Activated CD4-positive, alpha-beta T cell treated with anti-CD3 and anti-CD28 coated beads, Interleukin-2, amount 10 ng/mL, durations not matched to agents 24 days and 14 days (primary cell): ENCODE measurements at regions of chr14 and their contacts with region 1.

Region 1: DNA sequence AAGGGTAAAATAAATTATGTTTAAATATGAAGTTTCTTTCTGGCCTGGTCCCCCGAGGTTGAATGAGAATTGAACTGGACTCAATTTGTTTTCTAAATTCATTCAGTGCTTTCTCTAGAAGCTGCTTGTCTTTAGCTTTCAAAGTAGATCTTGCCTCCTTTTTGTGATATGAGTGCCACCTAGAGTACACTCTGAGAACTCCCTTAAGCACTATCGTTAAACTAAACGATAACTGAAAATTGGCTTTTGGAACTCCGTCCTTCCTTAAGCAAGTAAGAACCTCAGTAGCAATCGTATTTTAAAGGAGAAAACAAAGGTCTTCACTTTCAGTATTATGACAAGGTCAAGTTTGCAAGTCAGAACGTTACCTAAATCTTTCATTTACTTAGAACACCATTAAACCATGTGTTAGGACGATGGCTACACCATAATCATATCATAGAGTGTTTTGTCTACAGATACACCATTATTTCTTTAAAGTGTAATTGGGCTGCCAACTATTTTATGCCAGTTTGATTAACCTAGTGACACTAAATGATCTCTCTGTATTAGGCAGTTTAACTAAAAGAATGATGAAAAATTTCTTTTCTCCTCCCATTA is 364.8 kb downstream of the SNAPC1 start:
- DNase-seq: peak; percentile 75
- H3K4me3 Mint-ChIP-seq: no peak overlapping the region
- H3K27ac Mint-ChIP-seq: no peak overlapping the region
- H3K4me1 Mint-ChIP-seq: no peaks in the 10 kb centered on the region
- H3K27me3 Mint-ChIP-seq: peaks cover 70% of the 10 kb centered on the region

Region 2: DNA sequence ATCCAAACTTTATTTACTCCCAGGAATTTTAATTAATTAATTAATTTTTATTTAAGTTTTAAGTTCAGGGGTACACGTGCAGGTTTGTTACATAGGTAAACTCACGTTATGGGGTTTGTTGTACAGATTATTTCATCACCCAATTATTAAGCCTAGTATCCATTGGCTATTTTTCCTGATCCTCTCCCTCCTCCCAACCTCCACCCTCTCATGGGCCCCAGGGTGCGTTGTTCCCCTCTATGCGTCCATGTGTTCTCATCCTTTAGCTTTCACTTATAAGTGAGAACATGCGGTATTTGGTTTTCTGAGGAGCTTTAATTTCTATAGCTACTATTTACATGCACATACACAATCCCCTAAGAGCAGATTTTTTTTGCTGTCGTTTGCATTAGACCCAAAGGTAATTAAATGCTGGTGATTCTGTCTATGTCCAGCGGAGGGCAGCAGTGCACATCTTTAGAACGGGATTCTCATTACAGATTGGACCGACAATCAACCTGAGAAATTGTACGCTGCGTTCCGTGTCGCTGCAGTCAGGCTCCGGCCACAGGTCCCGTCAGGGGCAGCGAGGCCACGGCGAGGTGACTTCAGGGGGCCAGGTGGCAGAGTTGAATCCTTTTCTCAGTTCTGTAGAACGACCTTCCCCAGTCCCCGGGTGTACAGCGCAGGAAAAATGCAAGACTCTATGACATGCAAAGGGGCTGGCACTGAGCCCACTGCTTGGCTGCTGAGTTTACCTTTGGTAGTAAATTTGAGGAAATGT is 857.5 kb before region 1 on chr14:
- intact Hi-C with region 1: loop called (anchors 5 kb)
- DNase-seq: peak; percentile 93
- H3K4me3 Mint-ChIP-seq: peak overlapping the region; percentile 69
- H3K27ac Mint-ChIP-seq: no peak overlapping the region
- H3K4me1 Mint-ChIP-seq: peaks cover 7% of the 10 kb centered on the region
- H3K27me3 Mint-ChIP-seq: peaks cover 59% of the 10 kb centered on the region

Region 3: DNA sequence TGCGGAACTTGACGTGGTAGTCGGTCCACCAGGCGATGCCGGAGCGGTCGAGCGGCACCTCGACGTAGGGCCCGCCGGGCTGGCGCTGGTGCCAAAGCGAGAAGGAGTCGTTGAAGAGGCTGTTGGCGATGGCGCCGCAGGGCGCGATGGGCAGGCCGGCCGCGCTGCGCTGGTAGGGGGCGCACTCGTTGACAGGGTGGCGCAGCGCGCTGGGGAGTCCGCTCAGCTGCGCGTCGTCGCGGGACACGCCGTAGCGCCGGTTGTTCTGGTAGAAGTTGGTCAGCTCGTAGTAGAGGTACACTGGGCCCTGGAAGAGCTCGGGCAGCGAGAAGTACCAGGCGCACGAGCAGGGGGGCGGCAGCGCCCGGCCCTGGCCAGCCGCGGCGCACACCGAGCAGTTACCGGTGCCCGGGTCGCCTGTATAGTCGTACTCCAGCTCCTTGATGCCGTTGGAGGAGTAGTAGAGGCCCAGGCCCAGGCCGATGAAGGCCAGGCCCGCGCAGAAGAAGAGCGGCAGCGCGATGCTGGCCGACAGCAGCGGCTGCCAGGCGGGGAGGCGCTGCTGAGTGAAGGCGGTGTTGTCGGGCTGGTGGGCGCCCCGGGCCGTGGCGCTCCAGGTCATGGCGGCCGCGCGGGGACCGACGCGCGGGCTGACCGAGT is 846.3 kb before region 1 on chr14:
- intact Hi-C with region 1: loop called (anchors 5 kb)
- DNase-seq: peak; percentile 92
- H3K4me3 Mint-ChIP-seq: peak overlapping the region; percentile 88
- H3K27ac Mint-ChIP-seq: peak overlapping the region; percentile 84
- H3K4me1 Mint-ChIP-seq: peaks cover 31% of the 10 kb centered on the region
- H3K27me3 Mint-ChIP-seq: peaks cover 29% of the 10 kb centered on the region

Region 4: GRCh38 chr14:61461808-61462275 is 665.1 kb before region 1 on chr14:
- intact Hi-C with region 1: loop called (anchors 2 kb)
- DNase-seq: peak; percentile 86
- H3K4me3 Mint-ChIP-seq: peak overlapping the region; percentile 28
- H3K27ac Mint-ChIP-seq: peak overlapping the region; percentile 91
- H3K4me1 Mint-ChIP-seq: peaks cover 50% of the 10 kb centered on the region
- H3K27me3 Mint-ChIP-seq: no peaks in the 10 kb centered on the region

Region 5: DNA sequence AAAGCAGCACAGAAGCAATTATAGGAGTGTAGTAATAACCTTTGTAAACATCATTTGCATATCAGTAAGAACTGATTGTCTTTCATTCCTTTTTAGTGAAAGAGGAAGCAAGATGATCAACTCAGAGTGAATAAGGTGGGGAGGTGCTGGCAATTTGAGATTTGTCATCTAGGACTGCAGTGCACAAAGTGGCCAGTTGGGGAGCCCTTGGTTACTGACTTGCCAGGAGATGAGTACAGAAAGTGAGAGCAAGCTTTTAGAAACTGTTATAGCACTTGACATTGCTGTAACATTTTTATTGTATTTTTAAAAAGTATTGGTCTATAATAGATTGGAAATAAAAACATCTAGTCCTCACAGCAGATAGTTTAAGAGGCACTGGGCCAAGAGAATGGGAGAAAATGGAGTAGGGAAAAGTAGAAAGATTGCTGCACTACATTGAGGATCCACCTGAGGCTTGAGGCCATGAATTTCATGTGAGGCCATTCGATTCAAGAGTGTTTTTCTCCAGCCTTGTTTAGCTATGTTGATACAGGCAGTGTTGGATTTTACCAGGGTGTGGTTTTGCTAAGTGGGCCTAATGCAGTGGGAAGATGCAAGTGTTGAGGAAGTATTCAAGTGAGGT is 266.6 kb before region 1 on chr14:
- intact Hi-C with region 1: loop called (anchors 10 kb)
- DNase-seq: peak; percentile 89
- H3K4me3 Mint-ChIP-seq: no peak overlapping the region
- H3K27ac Mint-ChIP-seq: no peak overlapping the region
- H3K4me1 Mint-ChIP-seq: no peaks in the 10 kb centered on the region
- H3K27me3 Mint-ChIP-seq: peaks cover 39% of the 10 kb centered on the region

Region 6: GRCh38 chr14:61894452-61895077 is 232.4 kb before region 1 on chr14:
- intact Hi-C with region 1: loop called (anchors 1 kb)
- DNase-seq: peak; percentile 85
- H3K4me3 Mint-ChIP-seq: no peak overlapping the region
- H3K27ac Mint-ChIP-seq: no peak overlapping the region
- H3K4me1 Mint-ChIP-seq: peaks cover 13% of the 10 kb centered on the region
- H3K27me3 Mint-ChIP-seq: peaks cover 28% of the 10 kb centered on the region

Region 7: GRCh38 chr14:61925043-61925442 is 201.9 kb before region 1 on chr14:
- intact Hi-C with region 1: loop called (anchors 10 kb)
- DNase-seq: no peak
- H3K4me3 Mint-ChIP-seq: no peak overlapping the region
- H3K27ac Mint-ChIP-seq: no peak overlapping the region
- H3K4me1 Mint-ChIP-seq: peaks cover 2% of the 10 kb centered on the region
- H3K27me3 Mint-ChIP-seq: peaks cover 42% of the 10 kb centered on the region